Dendritic cell treated with granulocyte-macrophage colony-stimulating factor and Interleukin-4, amounts not matched to agents 40 ng/mL and 50 ng/mL, for 4 days (primary cell): ENCODE measurements at regions of chr22 and their contacts with region 1.

Region 1: GRCh38 chr22:40009292-40009769 is 14.6 kb downstream of the FAM83F start:
- H3K4me3 Mint-ChIP-seq: no peak overlapping the region
- H3K27ac Mint-ChIP-seq: no peak overlapping the region
- H3K4me1 Mint-ChIP-seq: peaks cover 40% of the 10 kb centered on the region
- H3K27me3 Mint-ChIP-seq: peaks cover 64% of the 10 kb centered on the region

Region 2: GRCh38 chr22:39946503-39947219 is 62.7 kb before region 1 on chr22:
- intact Hi-C with region 1: loop called (anchors 10 kb)
- H3K4me3 Mint-ChIP-seq: no peak overlapping the region
- H3K27ac Mint-ChIP-seq: no peak overlapping the region
- H3K4me1 Mint-ChIP-seq: peaks cover 28% of the 10 kb centered on the region
- H3K27me3 Mint-ChIP-seq: peaks cover 64% of the 10 kb centered on the region

Region 3: GRCh38 chr22:40121461-40121860 is 112.1 kb after region 1 on chr22:
- intact Hi-C with region 1: no loop called
- H3K4me3 Mint-ChIP-seq: no peak overlapping the region
- H3K27ac Mint-ChIP-seq: no peak overlapping the region
- H3K4me1 Mint-ChIP-seq: peaks cover 9% of the 10 kb centered on the region
- H3K27me3 Mint-ChIP-seq: no peaks in the 10 kb centered on the region

Region 4: DNA sequence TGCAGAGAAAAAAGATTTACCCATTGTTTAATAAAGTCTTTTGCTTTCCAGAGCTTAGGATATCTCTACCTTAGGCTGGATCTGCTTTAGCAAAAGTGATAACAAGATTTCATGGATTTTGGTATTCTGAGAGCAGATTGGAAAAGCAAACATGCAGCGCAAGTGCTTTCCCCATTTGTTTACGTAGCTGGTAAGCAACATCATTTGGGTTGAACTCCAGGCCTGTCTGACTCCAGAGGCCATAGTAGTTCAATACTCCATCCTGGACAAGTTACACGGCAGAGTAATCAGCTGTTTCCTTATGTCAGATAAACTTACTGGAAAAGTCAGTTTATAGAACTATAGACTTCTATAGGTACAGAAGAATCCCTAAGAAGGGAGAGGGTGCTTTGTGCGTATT is 127.8 kb after region 1 on chr22:
- intact Hi-C with region 1: no loop called
- H3K4me3 Mint-ChIP-seq: no peak overlapping the region
- H3K27ac Mint-ChIP-seq: no peak overlapping the region
- H3K4me1 Mint-ChIP-seq: no peaks in the 10 kb centered on the region
- H3K27me3 Mint-ChIP-seq: no peaks in the 10 kb centered on the region